ENCODE measurements at regions of chr4 and their contacts with region 1.

Region 1: DNA sequence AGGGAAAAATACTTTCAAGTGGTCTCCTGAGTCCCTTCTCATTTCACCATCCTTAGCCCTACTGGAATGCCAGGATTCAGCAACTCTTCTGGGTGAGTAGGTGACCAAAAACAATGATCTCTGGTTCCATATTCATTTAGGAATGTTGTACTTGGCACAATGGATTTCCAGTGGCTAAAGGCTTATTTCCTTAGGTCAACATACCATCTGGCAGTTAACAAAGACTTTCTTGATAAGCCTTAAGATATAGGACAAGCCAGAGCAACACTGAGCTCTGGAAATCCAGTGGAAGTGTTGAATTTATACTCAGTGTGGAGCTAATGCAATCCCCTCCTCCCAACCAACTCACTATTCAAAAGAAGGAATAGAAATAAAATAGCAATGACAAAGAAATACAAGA is 139.4 kb upstream of the EMCN start:
- DNase-seq: no peak
- H3K4me3 ChIP-seq: no peak overlapping the region
- H3K27ac ChIP-seq: no peak overlapping the region
- H3K4me1 ChIP-seq: no peaks in the 10 kb centered on the region
- H3K27me3 ChIP-seq: no peaks in the 10 kb centered on the region
- CTCF ChIP-seq: no peak

Region 2: DNA sequence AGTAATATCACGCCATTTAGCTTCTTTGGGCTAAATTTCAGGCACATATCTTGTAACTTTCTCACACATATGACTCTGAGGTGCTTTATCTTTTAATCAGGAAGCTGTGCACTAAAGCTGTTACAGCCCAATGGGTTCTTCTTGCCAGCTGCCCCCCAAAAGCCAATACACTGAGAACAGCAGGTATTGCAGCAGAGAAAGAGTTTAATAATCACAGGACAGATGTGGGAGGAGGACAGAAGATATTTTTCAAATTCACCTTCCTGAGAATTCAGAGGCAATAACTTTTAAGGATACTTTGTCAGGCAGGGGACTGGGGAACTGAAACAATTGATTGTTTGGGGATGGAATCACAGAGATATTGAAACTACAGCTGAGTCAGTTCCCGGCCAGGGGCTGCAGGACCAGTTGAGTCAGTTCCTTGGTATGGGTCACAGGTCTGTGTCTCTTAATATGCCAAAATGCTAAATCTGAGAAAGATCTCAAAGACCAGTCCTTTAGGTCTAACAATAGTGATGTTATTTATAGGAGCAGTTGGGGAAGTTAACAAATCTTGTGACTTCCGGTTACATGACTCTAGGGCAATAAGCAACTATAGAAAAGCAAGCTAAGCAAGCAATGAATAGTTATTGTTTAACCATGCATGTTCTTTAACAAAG is 495.0 kb before region 1 on chr4:
- intact Hi-C with region 1: no loop called
- DNase-seq: no peak
- H3K4me3 ChIP-seq: no peak overlapping the region
- H3K27ac ChIP-seq: no peak overlapping the region
- H3K4me1 ChIP-seq: no peaks in the 10 kb centered on the region
- H3K27me3 ChIP-seq: no peaks in the 10 kb centered on the region
- CTCF ChIP-seq: no peak

Region 3: DNA sequence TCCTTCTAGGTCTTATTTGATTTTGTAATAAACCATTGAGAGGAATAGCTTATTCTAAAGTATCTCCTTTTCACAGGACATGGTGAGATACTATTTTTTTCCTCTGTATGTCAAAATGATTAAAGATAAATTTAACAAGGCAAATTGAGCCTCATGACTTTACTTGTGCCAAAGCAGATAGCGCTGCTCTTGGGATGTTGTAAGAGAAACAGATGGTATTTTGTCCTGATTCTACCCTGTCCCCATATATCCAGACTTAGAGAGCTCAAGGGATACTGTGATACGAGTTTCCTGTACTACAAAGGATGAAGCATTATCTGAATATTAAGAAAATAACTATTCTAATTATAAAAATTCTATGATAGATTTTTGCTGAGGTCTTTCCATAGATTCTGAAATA is 173.4 kb before region 1 on chr4:
- intact Hi-C with region 1: loop called (anchors 5 kb)
- DNase-seq: no peak
- H3K4me3 ChIP-seq: no peak overlapping the region
- H3K27ac ChIP-seq: no peak overlapping the region
- H3K4me1 ChIP-seq: no peaks in the 10 kb centered on the region
- H3K27me3 ChIP-seq: no peaks in the 10 kb centered on the region
- CTCF ChIP-seq: no peak

Region 4: DNA sequence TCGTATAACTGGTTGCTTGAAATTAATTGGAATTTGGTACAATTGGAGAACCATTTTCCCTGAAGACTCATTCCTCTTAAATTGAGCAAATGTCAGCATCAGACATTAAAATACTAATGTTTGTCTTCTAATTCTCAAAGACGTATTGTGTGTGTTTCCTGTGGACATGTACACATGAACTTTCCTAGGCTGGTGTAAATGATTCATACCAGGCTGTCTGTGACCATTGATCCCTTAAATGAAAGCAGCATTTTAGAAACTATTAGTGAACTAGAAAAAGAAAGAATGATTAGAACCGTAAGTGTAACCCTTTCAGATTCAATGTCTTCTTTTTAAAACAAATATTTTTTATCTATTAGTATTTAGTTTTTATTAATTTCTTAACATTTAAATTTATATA is 357.2 kb after region 1 on chr4:
- intact Hi-C with region 1: no loop called
- DNase-seq: no peak
- H3K4me3 ChIP-seq: no peak overlapping the region
- H3K27ac ChIP-seq: no peak overlapping the region
- H3K4me1 ChIP-seq: peaks cover 0 to 10% (median 4%) of the 10 kb centered on the region in 4 donors
- H3K27me3 ChIP-seq: no peaks in the 10 kb centered on the region
- CTCF ChIP-seq: no peak

Measured in tibial artery (tissue), 4 donors.